ENCODE measurements at regions of chr4 and their contacts with region 1.

Region 1: GRCh38 chr4:110049951-110050925 is 137.6 kb downstream of the EGF start:
- DNase-seq: no peak
- H3K4me3 ChIP-seq: no peak overlapping the region
- CTCF ChIP-seq: peak; percentile 73

Region 2: GRCh38 chr4:109902559-109903251 is 147.5 kb before region 1 on chr4:
- CTCF ChIA-PET with region 1: no interaction called
- POLR2A ChIA-PET with region 1: no interaction called
- DNase-seq: no peak
- H3K4me3 ChIP-seq: no peak overlapping the region
- CTCF ChIP-seq: no peak

Region 3: GRCh38 chr4:110005461-110006056 is 44.7 kb before region 1 on chr4:
- CTCF ChIA-PET with region 1: interaction called, 13 read pairs
- POLR2A ChIA-PET with region 1: no interaction called
- DNase-seq: peak; percentile 41
- H3K4me3 ChIP-seq: no peak overlapping the region
- CTCF ChIP-seq: peak; percentile 61

Region 4: GRCh38 chr4:110034026-110034393 is 16.2 kb before region 1 on chr4:
- CTCF ChIA-PET with region 1: interaction called, 49 read pairs
- POLR2A ChIA-PET with region 1: no interaction called
- DNase-seq: no peak
- H3K4me3 ChIP-seq: no peak overlapping the region
- CTCF ChIP-seq: no peak

Region 5: GRCh38 chr4:110096405-110096804 is 46.2 kb after region 1 on chr4:
- CTCF ChIA-PET with region 1: interaction called, 10 read pairs
- POLR2A ChIA-PET with region 1: no interaction called
- DNase-seq: no peak
- H3K4me3 ChIP-seq: no peak overlapping the region
- CTCF ChIP-seq: no peak

Region 6: DNA sequence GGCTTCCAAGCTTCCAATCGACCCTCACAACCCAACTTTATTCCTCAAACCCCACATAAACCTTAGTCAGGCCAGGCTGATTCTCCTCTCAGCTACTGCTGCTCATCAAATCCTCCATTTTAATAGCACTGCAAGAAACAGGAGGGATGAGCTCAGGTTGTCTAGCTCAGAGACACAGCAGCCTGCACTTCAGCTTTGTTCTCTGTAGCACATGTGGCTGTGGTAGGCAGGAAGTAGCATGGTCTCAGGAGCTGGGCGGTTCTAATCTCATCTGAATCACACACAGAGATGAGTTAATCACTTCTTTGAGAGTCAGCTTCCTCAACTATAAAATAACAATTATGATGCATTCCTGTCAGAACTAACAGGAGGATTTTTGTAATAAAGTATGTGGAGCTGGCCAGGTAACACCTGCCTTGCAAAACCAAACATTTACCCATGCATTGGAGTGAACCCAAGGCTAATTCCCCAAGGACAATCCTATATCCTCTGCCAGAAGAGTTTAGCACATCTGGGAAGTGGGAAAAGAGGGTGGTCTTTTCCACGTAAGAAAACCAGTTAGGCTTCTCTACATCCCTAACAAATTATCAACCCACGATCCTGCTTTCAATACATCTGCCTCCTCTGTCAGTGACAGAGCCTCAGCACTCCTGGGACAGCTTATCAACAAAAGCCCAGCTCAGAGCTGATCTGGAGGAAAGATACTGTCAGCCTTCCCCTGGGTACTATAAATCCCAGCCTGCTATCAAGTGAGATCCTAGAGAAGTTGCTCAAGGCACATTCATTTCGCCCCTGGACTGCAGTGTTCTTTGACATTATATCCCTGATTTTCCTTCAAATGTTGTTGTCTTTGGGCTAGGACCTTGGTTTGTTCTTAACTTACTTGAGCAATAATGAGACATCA is 115.4 kb after region 1 on chr4:
- CTCF ChIA-PET with region 1: interaction called, 16 read pairs
- POLR2A ChIA-PET with region 1: no interaction called
- DNase-seq: no peak
- H3K4me3 ChIP-seq: no peak overlapping the region
- CTCF ChIP-seq: no peak

Region 7: GRCh38 chr4:110193822-110194761 is 143.9 kb after region 1 on chr4:
- CTCF ChIA-PET with region 1: interaction called, 21 read pairs
- POLR2A ChIA-PET with region 1: no interaction called
- DNase-seq: peak; percentile 85
- H3K4me3 ChIP-seq: no peak overlapping the region
- CTCF ChIP-seq: no peak

Region 8: DNA sequence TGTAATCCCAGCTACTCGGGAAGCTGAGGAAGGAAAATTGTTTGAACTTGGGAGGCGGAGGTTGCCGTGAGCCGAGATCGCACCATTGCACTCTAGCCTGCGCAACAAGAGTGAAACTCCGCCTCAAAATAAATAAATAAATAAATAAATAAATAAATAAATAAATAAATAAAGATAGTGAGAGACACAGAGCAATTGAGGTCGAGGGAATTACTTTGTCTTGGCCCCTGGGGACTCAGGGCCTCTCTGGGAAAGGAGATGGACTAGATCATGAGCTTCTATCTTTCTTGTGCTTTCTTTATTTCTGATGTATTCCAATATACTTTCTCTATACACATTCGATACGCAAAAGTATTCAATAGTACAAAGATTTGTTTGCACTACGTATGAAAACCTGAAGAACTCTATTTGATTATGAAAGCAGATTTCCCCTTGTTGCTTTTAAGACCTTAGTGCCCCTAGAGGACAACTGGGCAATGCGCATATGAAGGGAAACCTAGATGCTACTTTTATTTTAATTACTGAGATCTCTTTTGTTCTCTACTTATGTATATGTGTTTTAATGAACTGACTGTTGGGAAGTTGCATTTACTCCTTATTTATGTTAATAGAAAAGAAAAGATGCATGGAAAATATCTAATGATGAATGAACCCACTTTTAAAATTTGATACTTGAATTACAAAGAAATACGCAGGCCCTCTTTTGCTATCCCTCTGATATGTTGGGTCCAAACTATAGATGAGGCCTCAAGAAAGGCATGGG is 160.9 kb after region 1 on chr4:
- CTCF ChIA-PET with region 1: interaction called, 17 read pairs
- POLR2A ChIA-PET with region 1: no interaction called
- DNase-seq: no peak
- H3K4me3 ChIP-seq: no peak overlapping the region
- CTCF ChIP-seq: peak; percentile 67